ENCODE measurements at regions of chr11 and their contacts with region 1.

Region 1: DNA sequence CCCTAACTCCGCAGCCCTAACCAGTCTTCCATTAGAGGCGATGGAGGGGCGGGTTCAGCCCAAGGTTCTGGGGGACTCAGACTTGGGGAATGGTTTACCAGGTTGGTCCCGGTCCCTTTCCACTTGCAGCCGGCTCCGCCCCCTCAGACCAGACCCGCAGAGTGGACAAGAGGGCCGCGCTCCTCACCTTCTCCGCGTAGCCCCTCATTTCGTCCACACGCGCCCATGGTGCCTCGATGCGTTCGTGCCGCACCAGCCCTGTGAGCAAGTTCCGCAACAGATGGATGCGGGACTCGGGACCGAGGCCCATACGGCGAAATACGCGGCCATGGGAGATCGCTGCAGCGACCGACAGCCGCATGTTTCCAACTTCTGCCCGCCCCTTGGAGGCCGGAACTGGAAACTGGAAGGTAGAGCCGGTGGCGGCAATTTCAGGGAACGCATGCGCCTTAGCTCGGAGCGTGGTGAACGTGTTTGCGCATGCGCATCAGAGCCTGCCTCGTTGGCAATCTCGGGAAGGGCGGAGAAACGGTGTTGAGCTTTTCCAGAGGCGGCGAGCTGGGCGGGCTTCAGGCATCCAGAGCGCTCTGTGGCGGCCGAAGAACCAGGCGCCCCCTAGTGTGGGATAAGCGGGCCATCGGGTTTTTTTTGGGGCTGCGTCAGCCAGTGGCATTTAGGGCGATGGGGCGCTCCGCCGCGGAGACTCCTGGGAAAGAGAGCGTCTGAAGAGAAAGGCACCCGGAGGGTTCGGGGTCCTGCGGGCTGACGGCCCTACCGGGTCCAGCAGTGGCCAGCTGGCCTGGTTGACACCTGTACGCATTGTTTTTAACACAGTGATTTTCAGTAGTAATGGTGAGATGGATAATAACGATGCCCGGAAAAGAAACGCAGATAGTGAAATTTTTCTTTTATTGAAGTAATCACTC is at the start of gene MRPL17:
- DNase-seq: peak; percentile 96 to 100 (median 98)
- ATAC-seq: peak; percentile 95 to 99 (median 96)
- H3K4me3 ChIP-seq: peak within 1 kb of the TSS; percentile 88 to 92
- H3K4me3 Mint-ChIP-seq: peak within 1 kb of the TSS; percentile 96 to 100 (median 98)
- H3K27ac ChIP-seq: peak within 1 kb of the TSS; percentile 92
- H3K27ac Mint-ChIP-seq: peak within 1 kb of the TSS; percentile 99 to 100
- H3K4me1 ChIP-seq: peaks cover 16 to 18% of the 10 kb centered on the region in 2 experiments
- H3K4me1 Mint-ChIP-seq: peaks cover 29 to 45% (median 32%) of the 10 kb centered on the region in 3 donors
- H3K27me3 ChIP-seq: no peaks in the 10 kb centered on the region
- H3K27me3 Mint-ChIP-seq: no peaks in the 10 kb centered on the region
- total RNA-seq, gene MRPL17: 12.1 to 33.1 (median 30.2) TPM

Region 2: DNA sequence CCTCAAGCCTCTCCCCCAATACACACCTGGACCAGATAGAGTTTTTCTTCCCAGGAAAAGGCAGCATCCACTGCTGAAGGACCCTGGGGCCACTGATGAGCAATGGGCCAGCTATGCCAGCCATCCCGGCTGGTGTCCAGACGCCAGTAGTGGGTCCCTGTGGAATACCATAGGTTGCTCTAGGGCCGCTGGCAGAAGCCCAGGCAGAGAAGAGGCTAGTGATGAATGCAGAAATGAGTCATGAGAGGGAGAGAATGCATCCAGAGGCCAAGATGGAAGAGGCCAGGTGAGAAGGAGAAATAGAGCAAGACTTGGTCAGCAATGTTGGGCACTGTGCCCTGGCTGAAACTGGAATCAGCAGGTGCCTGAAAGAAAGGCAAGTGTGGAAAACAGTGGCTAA is 251.3 kb before region 1 on chr11:
- CTCF ChIA-PET with region 1: no interaction called
- POLR2A ChIA-PET with region 1: no interaction called
- DNase-seq: no peak
- ATAC-seq: no peak
- H3K4me3 ChIP-seq: no peak overlapping the region
- H3K4me3 Mint-ChIP-seq: no peak overlapping the region
- H3K27ac ChIP-seq: no peak overlapping the region
- H3K27ac Mint-ChIP-seq: no peak overlapping the region
- H3K4me1 ChIP-seq: no peaks in the 10 kb centered on the region
- H3K4me1 Mint-ChIP-seq: peaks cover 0 to 23% (median 2%) of the 10 kb centered on the region in 3 donors
- H3K27me3 ChIP-seq: no peaks in the 10 kb centered on the region
- H3K27me3 Mint-ChIP-seq: no peaks in the 10 kb centered on the region

Region 3: GRCh38 chr11:6505577-6506240 is 177.5 kb before region 1 on chr11:
- CTCF ChIA-PET with region 1: interaction called in 1 of 2 experiments, 7 read pairs
- POLR2A ChIA-PET with region 1: interaction called in 1 of 2 experiments, 12 read pairs
- DNase-seq: peak in 5 of 35 experiments; percentile 12 to 65 (median 17)
- ATAC-seq: peak in 2 of 4 experiments; percentile 36 to 61
- H3K4me3 ChIP-seq: no peak overlapping the region
- H3K4me3 Mint-ChIP-seq: no peak overlapping the region
- H3K27ac ChIP-seq: no peak overlapping the region
- H3K27ac Mint-ChIP-seq: no peak overlapping the region
- H3K4me1 ChIP-seq: no peaks in the 10 kb centered on the region
- H3K4me1 Mint-ChIP-seq: peaks cover 0 to 3% (median 0%) of the 10 kb centered on the region in 3 donors
- H3K27me3 ChIP-seq: no peaks in the 10 kb centered on the region
- H3K27me3 Mint-ChIP-seq: no peaks in the 10 kb centered on the region

Region 4: GRCh38 chr11:6603287-6604080 is 79.7 kb before region 1 on chr11 and contains the starts of genes ILK and RRP8:
- CTCF ChIA-PET with region 1: interaction called, 7 to 53 read pairs
- POLR2A ChIA-PET with region 1: interaction called in 1 of 2 experiments, 5 read pairs
- DNase-seq: peak; percentile 66 to 90 (median 74)
- ATAC-seq: peak; percentile 84 to 90 (median 88)
- H3K4me3 ChIP-seq: peak within 1 kb of the TSS; percentile 81 to 96
- H3K4me3 Mint-ChIP-seq: no peak within 1 kb of the TSS
- H3K27ac ChIP-seq: peak within 1 kb of the TSS; percentile 72
- H3K27ac Mint-ChIP-seq: no peak within 1 kb of the TSS
- H3K4me1 ChIP-seq: peaks cover 38 to 66% of the 10 kb centered on the region in 2 experiments
- H3K4me1 Mint-ChIP-seq: peaks cover 13 to 25% (median 21%) of the 10 kb centered on the region in 3 donors
- H3K27me3 ChIP-seq: no peaks in the 10 kb centered on the region
- H3K27me3 Mint-ChIP-seq: no peaks in the 10 kb centered on the region
- total RNA-seq, gene ILK: 49.3 to 111 (median 99.4) TPM
- total RNA-seq, gene RRP8: 24.5 to 35.5 (median 32.2) TPM

Region 5: DNA sequence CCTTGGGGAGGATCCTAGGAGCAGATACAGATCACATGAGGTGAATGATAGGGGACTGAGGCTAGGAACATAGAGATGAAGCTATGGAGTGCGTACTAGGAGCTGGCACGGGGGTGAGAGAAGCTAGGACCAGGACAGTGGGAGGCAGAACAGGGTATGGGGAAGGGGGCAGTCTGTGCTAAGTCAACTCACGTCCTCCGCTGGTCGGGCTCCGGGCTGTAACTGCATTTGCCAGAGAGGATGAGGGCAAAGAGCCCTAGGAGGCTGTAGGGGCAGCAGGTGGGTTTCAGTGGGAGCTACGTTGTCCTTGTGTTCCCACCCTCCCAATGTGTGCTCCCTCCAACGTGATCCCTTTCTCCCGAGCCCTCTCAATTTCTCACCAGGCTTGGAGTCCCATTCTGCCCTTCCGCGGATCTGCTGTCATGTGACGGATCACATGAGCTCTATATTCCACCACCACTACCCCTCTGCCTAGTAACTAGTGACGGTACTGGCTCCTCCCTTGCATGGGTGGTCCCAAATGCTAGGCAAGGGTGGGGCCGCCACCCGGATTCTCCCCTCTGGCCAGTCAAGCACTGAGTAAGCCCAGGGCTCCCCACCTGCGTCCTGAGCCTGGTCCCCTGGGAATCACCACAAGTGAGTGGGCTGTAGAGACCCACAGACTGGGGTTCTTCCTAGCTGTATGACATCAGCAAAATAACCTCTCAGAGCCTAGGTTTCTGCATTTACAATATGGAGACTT is 64.0 kb before region 1 on chr11 and contains the start of gene TPP1:
- CTCF ChIA-PET with region 1: interaction called in 1 of 2 experiments, 37 read pairs
- POLR2A ChIA-PET with region 1: interaction called, 5 read pairs
- DNase-seq: peak; percentile 79 to 94 (median 87)
- ATAC-seq: peak; percentile 90 to 98 (median 90)
- H3K4me3 ChIP-seq: peak within 1 kb of the TSS; percentile 66 to 98
- H3K4me3 Mint-ChIP-seq: no peak within 1 kb of the TSS
- H3K27ac ChIP-seq: peak within 1 kb of the TSS; percentile 57
- H3K27ac Mint-ChIP-seq: no peak within 1 kb of the TSS
- H3K4me1 ChIP-seq: peaks cover 10 to 31% of the 10 kb centered on the region in 2 experiments
- H3K4me1 Mint-ChIP-seq: peaks cover 4 to 14% (median 12%) of the 10 kb centered on the region in 3 donors
- H3K27me3 ChIP-seq: no peaks in the 10 kb centered on the region
- H3K27me3 Mint-ChIP-seq: no peaks in the 10 kb centered on the region
- total RNA-seq, gene TPP1: 67.4 to 168 (median 132) TPM

Region 6: GRCh38 chr11:6705905-6706535 is 22.8 kb after region 1 on chr11:
- CTCF ChIA-PET with region 1: interaction called, 4 to 9 read pairs
- POLR2A ChIA-PET with region 1: interaction called in 1 of 2 experiments, 20 read pairs
- DNase-seq: peak in 22 of 35 experiments; percentile 4 to 72 (median 28)
- ATAC-seq: peak; percentile 53 to 71 (median 62)
- H3K4me3 ChIP-seq: no peak overlapping the region
- H3K4me3 Mint-ChIP-seq: no peak overlapping the region
- H3K27ac ChIP-seq: no peak overlapping the region
- H3K27ac Mint-ChIP-seq: peak overlapping the region; percentile 41 to 72
- H3K4me1 ChIP-seq: peaks cover 0 to 2% of the 10 kb centered on the region in 2 experiments
- H3K4me1 Mint-ChIP-seq: peaks cover 24 to 29% (median 29%) of the 10 kb centered on the region in 3 donors
- H3K27me3 ChIP-seq: no peaks in the 10 kb centered on the region
- H3K27me3 Mint-ChIP-seq: no peaks in the 10 kb centered on the region

Measured in T-cell (primary cell).